ENCODE measurements at regions of chr7 and their contacts with region 1.

Region 1: GRCh38 chr7:22726345-22727185 is 435 bp upstream of the IL6 start:
- DNase-seq: peak; percentile 97
- ATAC-seq: peak; percentile 63
- H3K4me3 ChIP-seq: peak overlapping the region; percentile 69
- H3K27ac ChIP-seq: peak overlapping the region; percentile 97
- H3K4me1 ChIP-seq: peaks cover 23% of the 10 kb centered on the region
- H3K27me3 ChIP-seq: no peaks in the 10 kb centered on the region
- CTCF ChIP-seq: peak; percentile 73
- POLR2A ChIP-seq: no peak
- RAD21 ChIP-seq: peak; percentile 93

Region 2: DNA sequence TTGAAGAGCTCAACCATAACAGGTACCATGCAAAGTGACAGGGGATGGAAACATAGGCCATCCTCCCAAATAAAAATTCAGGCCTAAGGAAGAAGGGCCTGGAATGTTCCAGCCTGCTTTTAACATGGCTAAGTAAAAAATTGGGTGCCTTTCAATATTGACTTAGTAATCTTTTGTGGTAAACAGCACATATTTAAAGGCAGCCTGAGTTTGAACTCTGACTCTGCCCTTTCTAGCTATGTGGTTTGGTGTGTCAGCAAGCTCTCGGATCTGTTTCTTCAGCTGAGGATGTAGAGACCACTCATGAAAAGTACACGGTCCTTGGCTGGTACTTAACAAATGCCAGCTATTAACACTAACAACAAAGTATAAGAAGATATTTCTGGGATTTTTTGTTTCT is 589.1 kb before region 1 on chr7:
- CTCF ChIA-PET with region 1: no interaction called
- POLR2A ChIA-PET with region 1: no interaction called
- dilution Hi-C with region 1: no loop called
- in situ Hi-C with region 1: no loop called
- intact Hi-C with region 1: no loop called
- DNase-seq: peak; percentile 38
- ATAC-seq: peak; percentile 62
- H3K4me3 ChIP-seq: no peak overlapping the region
- H3K27ac ChIP-seq: no peak overlapping the region
- H3K4me1 ChIP-seq: no peaks in the 10 kb centered on the region
- H3K27me3 ChIP-seq: peaks cover 3% of the 10 kb centered on the region
- CTCF ChIP-seq: no peak
- POLR2A ChIP-seq: no peak
- RAD21 ChIP-seq: no peak

Region 3: GRCh38 chr7:22586786-22587140 is 139.8 kb before region 1 on chr7:
- CTCF ChIA-PET with region 1: interaction called, 5 read pairs
- POLR2A ChIA-PET with region 1: no interaction called
- dilution Hi-C with region 1: no loop called
- in situ Hi-C with region 1: no loop called
- intact Hi-C with region 1: loop called (anchors 1 kb)
- DNase-seq: peak; percentile 66
- ATAC-seq: peak; percentile 53; the same call in 1 of the 2 replicates
- H3K4me3 ChIP-seq: no peak overlapping the region
- H3K27ac ChIP-seq: no peak overlapping the region
- H3K4me1 ChIP-seq: peaks cover 22% of the 10 kb centered on the region
- H3K27me3 ChIP-seq: no peaks in the 10 kb centered on the region
- CTCF ChIP-seq: peak; percentile 56
- POLR2A ChIP-seq: no peak
- RAD21 ChIP-seq: peak; percentile 44

Region 4: DNA sequence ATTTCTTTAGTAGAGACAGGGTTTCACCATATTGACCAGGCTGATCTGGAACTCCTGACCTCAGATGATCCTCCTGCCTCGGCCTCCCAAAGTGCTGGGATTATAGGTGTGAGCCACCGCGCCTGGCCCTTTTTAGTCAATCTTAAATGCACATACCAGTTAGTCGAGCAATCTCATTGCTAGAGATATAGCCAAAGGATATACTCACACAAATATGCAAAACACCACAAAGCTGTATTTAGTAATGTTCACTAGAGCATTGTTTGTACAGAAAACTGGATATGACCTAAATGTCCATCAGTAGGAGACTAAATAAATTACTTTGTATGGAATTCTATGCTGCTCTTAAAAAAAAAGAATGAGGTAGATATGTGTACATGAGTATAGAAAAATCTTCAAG is 24.0 kb before region 1 on chr7:
- CTCF ChIA-PET with region 1: interaction called, 5 read pairs
- POLR2A ChIA-PET with region 1: interaction called, 21 read pairs
- dilution Hi-C with region 1: no loop called
- in situ Hi-C with region 1: no loop called
- intact Hi-C with region 1: no loop called
- DNase-seq: peak; percentile 71
- ATAC-seq: peak; percentile 73
- H3K4me3 ChIP-seq: no peak overlapping the region
- H3K27ac ChIP-seq: peak overlapping the region; percentile 8; the same call in 1 of the 2 replicates
- H3K4me1 ChIP-seq: peaks cover 10% of the 10 kb centered on the region
- H3K27me3 ChIP-seq: no peaks in the 10 kb centered on the region
- CTCF ChIP-seq: no peak
- POLR2A ChIP-seq: no peak
- RAD21 ChIP-seq: no peak

Region 5: GRCh38 chr7:22765609-22766008 is 39.0 kb after region 1 on chr7:
- CTCF ChIA-PET with region 1: no interaction called
- POLR2A ChIA-PET with region 1: no interaction called
- dilution Hi-C with region 1: no loop called
- in situ Hi-C with region 1: no loop called
- intact Hi-C with region 1: no loop called
- DNase-seq: no peak
- ATAC-seq: no peak
- H3K4me3 ChIP-seq: no peak overlapping the region
- H3K27ac ChIP-seq: no peak overlapping the region
- H3K4me1 ChIP-seq: no peaks in the 10 kb centered on the region; the same call in 1 of the 2 replicates
- H3K27me3 ChIP-seq: no peaks in the 10 kb centered on the region
- CTCF ChIP-seq: no peak
- POLR2A ChIP-seq: no peak
- RAD21 ChIP-seq: no peak

Region 6: DNA sequence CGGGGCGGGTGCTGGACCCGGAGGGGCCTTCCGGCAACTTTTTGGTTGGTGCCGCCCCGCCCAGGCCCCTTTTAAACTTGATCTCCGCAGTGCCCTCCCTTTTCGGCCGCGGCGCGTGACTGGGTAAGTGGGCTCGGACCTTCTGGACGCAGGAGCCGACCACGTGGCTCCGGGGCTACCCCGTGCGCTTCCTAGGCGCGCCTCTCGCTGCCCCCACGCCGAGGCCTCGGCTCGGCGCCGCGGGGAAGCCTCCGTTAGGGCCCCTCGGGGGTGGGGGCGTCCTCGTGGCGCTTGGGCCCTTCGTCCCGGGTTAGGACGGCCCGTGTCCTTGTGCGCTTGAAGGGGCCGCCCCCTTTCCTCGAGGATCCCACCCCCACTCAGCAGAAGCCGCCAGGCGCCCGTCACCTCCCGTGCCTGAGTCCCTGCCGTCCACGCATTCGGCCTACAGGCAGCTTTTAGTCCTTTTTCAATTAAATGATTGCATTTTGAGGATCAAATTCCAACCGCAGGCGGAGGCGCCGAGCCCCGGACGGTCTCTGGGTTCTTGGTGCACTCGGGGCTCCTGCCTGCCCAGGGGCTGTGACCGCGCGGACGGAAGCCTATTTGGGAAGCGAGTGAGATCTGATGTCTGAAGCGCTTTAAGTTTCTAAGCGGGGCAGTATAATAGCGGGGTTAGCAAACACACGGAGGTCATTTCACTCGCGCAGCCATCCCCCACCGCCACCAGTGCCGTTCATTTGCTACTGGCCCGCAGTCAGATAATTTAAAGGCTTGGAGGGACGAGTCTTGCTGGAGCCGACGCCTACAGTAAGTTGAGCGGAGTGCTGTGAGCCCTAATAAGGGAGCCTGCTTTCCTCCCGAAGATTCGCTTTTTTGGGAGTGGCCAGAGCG is 127.8 kb after region 1 on chr7:
- CTCF ChIA-PET with region 1: no interaction called
- POLR2A ChIA-PET with region 1: interaction called, 5 read pairs
- dilution Hi-C with region 1: no loop called
- in situ Hi-C with region 1: no loop called
- intact Hi-C with region 1: loop called (anchors 1 kb)
- DNase-seq: peak; percentile 89
- ATAC-seq: peak; percentile 78
- H3K4me3 ChIP-seq: peak overlapping the region; percentile 68
- H3K27ac ChIP-seq: peak overlapping the region; percentile 80
- H3K4me1 ChIP-seq: peaks cover 11% of the 10 kb centered on the region
- H3K27me3 ChIP-seq: no peaks in the 10 kb centered on the region
- CTCF ChIP-seq: no peak
- POLR2A ChIP-seq: peak; percentile 91
- RAD21 ChIP-seq: no peak; the same call in 1 of the 2 replicates

Region 7: GRCh38 chr7:23055582-23056178 is 329.1 kb after region 1 on chr7:
- CTCF ChIA-PET with region 1: interaction called, 9 read pairs
- POLR2A ChIA-PET with region 1: no interaction called
- dilution Hi-C with region 1: no loop called
- in situ Hi-C with region 1: loop called (anchors 10 kb)
- intact Hi-C with region 1: loop called (anchors 2 kb)
- DNase-seq: peak; percentile 77
- ATAC-seq: peak; percentile 94
- H3K4me3 ChIP-seq: no peak overlapping the region
- H3K27ac ChIP-seq: no peak overlapping the region
- H3K4me1 ChIP-seq: no peaks in the 10 kb centered on the region
- H3K27me3 ChIP-seq: no peaks in the 10 kb centered on the region
- CTCF ChIP-seq: peak; percentile 94
- POLR2A ChIP-seq: peak; percentile 45; the same call in 1 of the 2 replicates
- RAD21 ChIP-seq: peak; percentile 98